ENCODE measurements at regions of chr2 and their contacts with region 1.

Region 1: GRCh38 chr2:181085734-181086133 is 105.3 kb downstream of the UBE2E3 start:
- DNase-seq: no peak

Region 2: DNA sequence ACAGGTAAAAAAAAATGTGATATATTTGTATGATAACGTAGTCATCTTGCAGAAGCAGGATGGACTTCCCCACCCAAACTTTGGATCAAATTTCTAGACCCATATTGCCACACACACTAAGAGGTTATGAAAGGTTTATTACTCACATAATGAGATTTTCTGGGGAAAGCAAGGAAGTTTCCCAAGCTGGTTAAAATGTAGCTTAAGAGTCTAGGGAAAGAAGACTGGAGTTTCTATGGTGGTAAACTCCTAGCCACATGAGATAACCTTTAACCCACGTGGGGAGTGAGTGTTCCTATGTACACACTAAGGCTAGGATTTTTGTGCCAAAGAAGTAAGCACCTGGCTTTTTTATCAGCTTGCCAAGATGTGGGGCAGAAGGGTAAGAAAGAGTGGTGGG is 441.0 kb before region 1 on chr2:
- intact Hi-C with region 1: loop called in 1 of 2 experiments (anchors 5 kb)
- DNase-seq: no peak